MCF 10A (cell line): ENCODE measurements at regions of chr4 and their contacts with region 1.

Region 1: DNA sequence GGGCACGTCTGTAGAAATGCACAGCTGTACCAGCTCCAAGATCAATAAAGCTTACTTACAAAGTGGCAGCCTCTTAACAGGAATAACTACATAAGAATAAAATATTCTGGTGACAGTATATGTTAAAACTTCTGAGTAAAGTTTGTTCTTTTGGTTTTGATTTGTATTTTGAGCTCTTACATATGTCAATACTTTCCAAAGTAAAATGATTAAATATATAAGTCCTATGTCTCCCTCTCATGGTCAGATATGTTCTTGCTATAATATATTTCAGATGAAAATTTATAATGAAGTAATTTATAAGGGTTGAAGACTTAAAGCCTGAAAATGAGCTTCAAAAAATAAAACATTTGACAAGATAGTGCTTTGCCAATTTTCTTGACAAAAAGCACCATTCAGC is 254.4 kb downstream of the NPFFR2 start:
- DNase-seq: peak; percentile 40
- H3K4me3 Mint-ChIP-seq: no peak overlapping the region
- H3K27ac Mint-ChIP-seq: no peak overlapping the region
- H3K4me1 Mint-ChIP-seq: no peaks in the 10 kb centered on the region
- H3K27me3 Mint-ChIP-seq: no peaks in the 10 kb centered on the region
- CTCF ChIP-seq: peak; percentile 34

Region 2: DNA sequence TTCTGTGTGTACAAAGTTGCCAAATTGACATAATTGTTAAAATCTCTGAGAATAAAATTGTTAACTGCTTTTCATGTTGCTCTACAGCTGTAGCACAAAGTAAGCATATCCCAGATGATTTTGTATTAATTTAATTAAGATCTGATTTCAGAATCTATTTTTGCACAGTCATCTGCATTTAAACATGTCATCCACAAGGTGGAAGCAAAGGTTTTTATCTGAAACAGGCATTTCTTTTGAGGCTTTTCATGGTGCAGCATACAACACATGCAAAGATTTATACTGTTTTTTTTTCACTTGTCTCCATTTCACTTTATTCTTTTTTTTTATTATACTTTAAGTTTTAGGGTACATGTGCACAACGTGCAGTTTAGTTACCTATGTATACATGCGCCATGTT is 553.5 kb before region 1 on chr4:
- CTCF ChIA-PET with region 1: interaction called, 38 read pairs
- POLR2A ChIA-PET with region 1: interaction called, 3 read pairs
- intact Hi-C with region 1: loop called (anchors 1 kb)
- DNase-seq: peak; percentile 54
- H3K4me3 Mint-ChIP-seq: no peak overlapping the region
- H3K27ac Mint-ChIP-seq: no peak overlapping the region
- H3K4me1 Mint-ChIP-seq: no peaks in the 10 kb centered on the region
- H3K27me3 Mint-ChIP-seq: no peaks in the 10 kb centered on the region
- CTCF ChIP-seq: peak; percentile 56

Region 3: DNA sequence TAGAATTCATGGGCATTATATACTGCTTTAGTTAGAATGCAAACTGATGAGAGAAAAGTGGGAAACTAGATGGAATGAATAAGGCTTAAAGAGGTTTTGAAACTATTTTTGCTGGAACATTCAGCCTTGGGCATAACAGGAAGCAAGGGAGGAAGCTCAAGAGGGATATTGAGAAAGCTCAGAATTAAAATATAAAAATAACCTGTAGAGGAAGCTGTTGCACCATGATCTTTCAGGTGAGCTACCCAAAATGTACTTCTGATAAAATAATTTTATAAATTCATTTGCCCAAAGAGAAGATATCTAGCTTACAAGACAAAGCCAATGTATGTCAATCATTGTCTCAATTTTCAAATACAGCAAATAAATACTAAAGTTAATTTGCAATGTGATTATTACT is 513.6 kb before region 1 on chr4:
- CTCF ChIA-PET with region 1: interaction called, 16 read pairs
- POLR2A ChIA-PET with region 1: interaction called, 3 read pairs
- intact Hi-C with region 1: loop called (anchors 1 kb)
- DNase-seq: peak; percentile 8
- H3K4me3 Mint-ChIP-seq: no peak overlapping the region
- H3K27ac Mint-ChIP-seq: no peak overlapping the region
- H3K4me1 Mint-ChIP-seq: peaks cover 6% of the 10 kb centered on the region
- H3K27me3 Mint-ChIP-seq: no peaks in the 10 kb centered on the region
- CTCF ChIP-seq: peak; percentile 26

Region 4: GRCh38 chr4:71941001-71941400 is 345.2 kb before region 1 on chr4:
- CTCF ChIA-PET with region 1: no interaction called
- POLR2A ChIA-PET with region 1: no interaction called
- intact Hi-C with region 1: loop called (anchors 10 kb)
- DNase-seq: peak; percentile 36
- H3K4me3 Mint-ChIP-seq: no peak overlapping the region
- H3K27ac Mint-ChIP-seq: no peak overlapping the region
- H3K4me1 Mint-ChIP-seq: peaks cover 15% of the 10 kb centered on the region
- H3K27me3 Mint-ChIP-seq: no peaks in the 10 kb centered on the region
- CTCF ChIP-seq: peak; percentile 37

Region 5: GRCh38 chr4:72255269-72255668 is 30.9 kb before region 1 on chr4:
- CTCF ChIA-PET with region 1: no interaction called
- POLR2A ChIA-PET with region 1: no interaction called
- intact Hi-C with region 1: no loop called
- DNase-seq: no peak
- H3K4me3 Mint-ChIP-seq: no peak overlapping the region
- H3K27ac Mint-ChIP-seq: no peak overlapping the region
- H3K4me1 Mint-ChIP-seq: no peaks in the 10 kb centered on the region
- H3K27me3 Mint-ChIP-seq: no peaks in the 10 kb centered on the region
- CTCF ChIP-seq: no peak